Right ventricle myocardium superior (tissue), 1 donor: ENCODE measurements at regions of chr10 and their contacts with region 1.

Region 1: DNA sequence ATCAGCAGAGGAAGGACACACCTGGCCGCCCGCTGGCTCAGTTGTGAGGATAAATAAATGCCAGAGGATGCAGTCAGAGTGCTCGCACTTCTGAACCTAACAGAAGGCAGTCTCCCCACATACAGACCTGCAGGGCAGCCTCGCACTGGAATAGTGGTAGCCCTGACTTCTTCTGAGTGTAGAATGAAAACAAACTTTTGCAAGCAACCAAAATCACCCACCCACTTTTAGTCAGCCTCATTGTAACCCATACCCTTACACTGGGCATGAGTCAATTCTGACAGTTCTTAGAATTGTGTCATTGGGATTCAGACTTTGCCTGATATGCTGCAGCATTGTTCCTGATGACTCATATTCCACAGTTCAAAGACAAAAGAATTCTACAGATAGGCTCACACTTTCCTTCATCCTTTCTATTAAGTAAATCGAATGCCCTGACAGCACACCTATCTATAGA is 167.0 kb upstream of the CDK1 start:
- DNase-seq: no peak
- ATAC-seq: no peak

Region 2: GRCh38 chr10:60549686-60550085 is 61.6 kb before region 1 on chr10:
- intact Hi-C with region 1: loop called (anchors 10 kb)
- DNase-seq: no peak
- ATAC-seq: no peak